H1 (cell line): ENCODE measurements at regions of chr4 and their contacts with region 1.

Region 1: GRCh38 chr4:56977321-56978012 is at the start of gene NOA1:
- DNase-seq: peak; percentile 96 to 98
- H3K4me3 ChIP-seq: peak within 1 kb of the TSS; percentile 85 to 92 (median 90)
- H3K27ac ChIP-seq: peak within 1 kb of the TSS; percentile 40
- H3K4me1 ChIP-seq: peaks cover 0 to 4% (median 0%) of the 10 kb centered on the region in 4 experiments; a peak in 3 of 7 replicates
- H3K27me3 ChIP-seq: no peaks in the 10 kb centered on the region; a peak in 1 of 7 replicates
- CTCF ChIP-seq: no peak
- EP300 ChIP-seq: no peak
- POLR2A ChIP-seq: peak in 1 of 2 experiments; percentile 87; a peak in 2 of 3 replicates
- RAD21 ChIP-seq: no peak
- total RNA-seq, gene NOA1: 28.1 and 28.5 TPM in 2 replicates

Region 2: GRCh38 chr4:56907489-56908205 is 69.8 kb before region 1 on chr4 and contains the start of gene REST:
- CTCF ChIA-PET with region 1: no interaction called
- POLR2A ChIA-PET with region 1: interaction called, 55 read pairs
- DNase-seq: peak; percentile 91 to 95
- H3K4me3 ChIP-seq: peak within 1 kb of the TSS; percentile 68 to 86 (median 73)
- H3K27ac ChIP-seq: peak within 1 kb of the TSS; percentile 88
- H3K4me1 ChIP-seq: peaks cover 8 to 18% (median 14%) of the 10 kb centered on the region in 4 experiments; a peak in 5 of 7 replicates
- H3K27me3 ChIP-seq: peaks cover 0 to 6% (median under 1%) of the 10 kb centered on the region in 4 experiments; a peak in 3 of 7 replicates
- CTCF ChIP-seq: no peak
- EP300 ChIP-seq: peak in 1 of 2 experiments; percentile 80; a peak in 1 of 3 replicates
- POLR2A ChIP-seq: peak in 1 of 2 experiments; percentile 79; a peak in 2 of 3 replicates
- RAD21 ChIP-seq: no peak
- total RNA-seq, gene REST: 66.3 and 70.2 TPM in 2 replicates

Region 3: DNA sequence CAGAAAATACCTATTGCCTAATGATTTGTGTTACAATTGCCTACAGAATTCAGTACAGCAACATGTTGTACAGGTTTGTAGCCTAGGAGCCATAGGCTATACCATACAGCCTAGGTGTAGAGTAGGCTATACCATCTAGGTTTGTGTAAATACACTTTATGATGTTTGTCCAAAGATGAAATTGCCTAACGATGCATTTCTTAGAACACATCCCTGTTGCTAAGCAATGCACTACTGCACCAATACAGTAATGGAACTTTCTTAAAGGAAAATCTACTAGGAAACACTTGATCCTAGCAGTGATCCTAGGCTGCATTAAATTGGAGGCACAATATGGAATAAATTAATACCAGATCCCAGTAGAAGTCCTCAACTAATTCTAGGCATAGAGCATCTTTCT is 18.4 kb before region 1 on chr4:
- CTCF ChIA-PET with region 1: interaction called, 12 read pairs
- POLR2A ChIA-PET with region 1: interaction called, 40 read pairs
- DNase-seq: no peak
- H3K4me3 ChIP-seq: no peak overlapping the region
- H3K27ac ChIP-seq: no peak overlapping the region
- H3K4me1 ChIP-seq: no peaks in the 10 kb centered on the region
- H3K27me3 ChIP-seq: no peaks in the 10 kb centered on the region
- CTCF ChIP-seq: no peak
- EP300 ChIP-seq: no peak
- POLR2A ChIP-seq: no peak
- RAD21 ChIP-seq: no peak

Region 4: DNA sequence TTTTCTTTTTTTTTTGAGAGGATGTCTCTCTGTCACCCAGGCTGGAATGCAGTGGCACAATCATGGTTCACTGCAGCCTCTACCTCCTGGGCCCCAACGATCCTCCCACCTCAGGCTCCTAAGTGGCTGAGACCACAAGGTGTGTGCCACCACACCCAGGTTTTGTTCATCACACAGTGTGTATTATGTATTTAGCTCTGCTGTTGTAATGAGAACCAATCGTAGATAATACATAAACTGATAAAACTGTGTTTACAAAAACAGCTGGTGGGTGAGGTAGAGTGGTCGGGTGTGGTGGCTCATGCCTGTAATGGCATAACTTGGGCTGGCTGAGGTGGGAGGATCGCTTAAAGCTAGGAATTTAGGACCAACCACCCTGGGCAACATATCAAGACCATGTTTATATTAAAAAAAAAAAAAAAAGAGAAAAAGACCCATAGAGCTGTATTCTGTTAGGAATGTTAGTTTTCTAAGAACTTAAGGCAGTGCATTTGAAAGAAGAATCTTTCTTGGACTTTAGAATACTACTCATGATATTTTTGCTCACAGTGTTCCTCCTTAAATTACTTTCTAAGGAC is 36.2 kb after region 1 on chr4:
- CTCF ChIA-PET with region 1: no interaction called
- POLR2A ChIA-PET with region 1: interaction called, 17 read pairs
- DNase-seq: no peak
- H3K4me3 ChIP-seq: no peak overlapping the region
- H3K27ac ChIP-seq: no peak overlapping the region
- H3K4me1 ChIP-seq: no peaks in the 10 kb centered on the region
- H3K27me3 ChIP-seq: no peaks in the 10 kb centered on the region
- CTCF ChIP-seq: no peak
- EP300 ChIP-seq: no peak
- POLR2A ChIP-seq: no peak
- RAD21 ChIP-seq: no peak